Mammary epithelial cell (primary cell): ENCODE measurements at regions of chr14 and their contacts with region 1.

Region 1: DNA sequence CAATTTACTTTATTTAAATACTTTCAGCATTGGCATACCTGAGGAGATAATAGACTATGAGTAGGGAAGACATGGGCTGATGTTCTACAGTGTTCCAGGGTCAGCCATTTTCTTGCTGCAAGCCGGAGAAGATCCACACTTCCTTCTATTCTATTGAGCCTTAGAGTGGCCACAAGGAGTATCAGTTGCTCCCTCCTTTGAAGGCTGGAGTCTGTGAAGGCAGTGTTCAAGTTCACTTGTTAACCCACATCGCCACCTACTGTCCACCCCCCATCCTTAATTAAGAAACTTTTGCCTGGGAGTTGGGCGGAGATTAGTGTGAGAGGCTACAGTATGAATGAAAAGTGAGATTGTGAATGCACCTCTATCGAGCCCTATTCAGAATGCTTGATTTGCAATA is 666.6 kb downstream of the NRXN3 start:
- DNase-seq: peak; percentile 60
- H3K4me3 ChIP-seq: no peak overlapping the region
- H3K27ac ChIP-seq: no peak overlapping the region
- H3K4me1 ChIP-seq: no peaks in the 10 kb centered on the region
- H3K27me3 ChIP-seq: no peaks in the 10 kb centered on the region
- CTCF ChIP-seq: peak; percentile 53 to 73

Region 2: DNA sequence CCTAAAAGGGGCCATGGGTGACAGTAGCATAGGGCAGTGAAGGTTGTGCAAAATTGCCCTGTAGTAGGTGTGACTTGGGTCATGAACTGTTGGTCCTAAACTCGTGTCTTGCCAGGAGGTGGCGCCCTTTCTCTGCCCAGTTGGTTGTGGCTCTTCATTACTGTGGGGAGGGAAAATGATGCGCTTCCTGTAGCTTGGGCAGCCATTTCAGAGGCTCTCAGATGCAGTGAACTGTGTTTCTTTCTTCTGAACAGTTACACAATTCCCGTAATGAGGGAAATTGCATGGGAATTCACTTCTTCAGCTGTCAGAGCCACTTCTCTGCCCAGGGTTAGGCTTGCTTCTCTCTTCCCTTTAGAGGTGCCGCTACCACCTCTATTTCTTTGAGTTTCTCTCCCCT is 814.7 kb before region 1 on chr14:
- CTCF ChIA-PET with region 1: no interaction called
- dilution Hi-C with region 1: no loop called
- in situ Hi-C with region 1: no loop called
- intact Hi-C with region 1: loop called (anchors 10 kb)
- DNase-seq: peak; percentile 46
- H3K4me3 ChIP-seq: no peak overlapping the region
- H3K27ac ChIP-seq: no peak overlapping the region
- H3K4me1 ChIP-seq: no peaks in the 10 kb centered on the region
- H3K27me3 ChIP-seq: no peaks in the 10 kb centered on the region
- CTCF ChIP-seq: peak; percentile 65 to 68

Region 3: GRCh38 chr14:78455896-78456435 is 380.8 kb before region 1 on chr14:
- CTCF ChIA-PET with region 1: no interaction called
- dilution Hi-C with region 1: no loop called
- in situ Hi-C with region 1: no loop called
- intact Hi-C with region 1: loop called (anchors 10 kb)
- DNase-seq: no peak
- H3K4me3 ChIP-seq: no peak overlapping the region
- H3K27ac ChIP-seq: no peak overlapping the region
- H3K4me1 ChIP-seq: no peaks in the 10 kb centered on the region
- H3K27me3 ChIP-seq: no peaks in the 10 kb centered on the region
- CTCF ChIP-seq: no peak

Region 4: GRCh38 chr14:78598041-78598920 is 238.5 kb before region 1 on chr14:
- CTCF ChIA-PET with region 1: no interaction called
- dilution Hi-C with region 1: no loop called
- in situ Hi-C with region 1: no loop called
- intact Hi-C with region 1: loop called (anchors 1 kb)
- DNase-seq: peak; percentile 16
- H3K4me3 ChIP-seq: no peak overlapping the region
- H3K27ac ChIP-seq: no peak overlapping the region
- H3K4me1 ChIP-seq: no peaks in the 10 kb centered on the region
- H3K27me3 ChIP-seq: no peaks in the 10 kb centered on the region
- CTCF ChIP-seq: peak; percentile 91 to 96

Region 5: GRCh38 chr14:78700236-78700635 is 136.5 kb before region 1 on chr14:
- CTCF ChIA-PET with region 1: no interaction called
- dilution Hi-C with region 1: no loop called
- in situ Hi-C with region 1: no loop called
- intact Hi-C with region 1: loop called (anchors 2 kb)
- DNase-seq: no peak
- H3K4me3 ChIP-seq: no peak overlapping the region
- H3K27ac ChIP-seq: no peak overlapping the region
- H3K4me1 ChIP-seq: no peaks in the 10 kb centered on the region
- H3K27me3 ChIP-seq: no peaks in the 10 kb centered on the region
- CTCF ChIP-seq: peak in 1 of 2 donors; percentile 9

Region 6: GRCh38 chr14:78933948-78934524 is 97.3 kb after region 1 on chr14:
- CTCF ChIA-PET with region 1: interaction called, 19 read pairs
- dilution Hi-C with region 1: no loop called
- in situ Hi-C with region 1: no loop called
- intact Hi-C with region 1: no loop called
- DNase-seq: peak; percentile 8
- H3K4me3 ChIP-seq: no peak overlapping the region
- H3K27ac ChIP-seq: no peak overlapping the region
- H3K4me1 ChIP-seq: no peaks in the 10 kb centered on the region
- H3K27me3 ChIP-seq: no peaks in the 10 kb centered on the region
- CTCF ChIP-seq: peak; percentile 25 to 51